ENCODE measurements at regions of chr2 and their contacts with region 1.

Region 1: GRCh38 chr2:201151127-201151981 is 31.6 kb upstream of the CASP10 start:
- DNase-seq: no peak

Region 2: GRCh38 chr2:201118121-201118960 is 33.0 kb before region 1 on chr2:
- intact Hi-C with region 1: loop called (anchors 5 kb)
- DNase-seq: peak; percentile 96

Measured in posterior vena cava (tissue), 2 donors.